Posterior vena cava (tissue), 2 donors: ENCODE measurements at regions of chr1 and their contacts with region 1.

Region 1: GRCh38 chr1:157490467-157491165 is 61.7 kb downstream of the FCRL5 start:
- DNase-seq: peak; percentile 89

Region 2: DNA sequence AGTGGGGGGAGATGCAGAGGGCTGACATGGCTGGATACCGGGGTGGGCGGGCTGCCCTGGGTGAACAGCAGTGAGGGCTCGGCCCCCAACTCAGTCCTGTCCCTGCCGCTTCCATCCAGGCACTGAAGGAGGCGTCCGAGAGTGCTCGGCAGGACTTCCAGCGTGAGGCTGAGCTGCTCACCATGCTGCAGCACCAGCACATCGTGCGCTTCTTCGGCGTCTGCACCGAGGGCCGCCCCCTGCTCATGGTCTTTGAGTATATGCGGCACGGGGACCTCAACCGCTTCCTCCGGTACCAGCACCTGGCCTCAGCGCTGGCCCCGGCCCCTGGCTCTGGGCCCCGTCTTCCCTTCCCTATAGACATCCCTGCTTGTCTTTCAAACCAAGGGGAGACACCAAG is 614.3 kb before region 1 on chr1:
- intact Hi-C with region 1: no loop called
- DNase-seq: no peak

Region 3: DNA sequence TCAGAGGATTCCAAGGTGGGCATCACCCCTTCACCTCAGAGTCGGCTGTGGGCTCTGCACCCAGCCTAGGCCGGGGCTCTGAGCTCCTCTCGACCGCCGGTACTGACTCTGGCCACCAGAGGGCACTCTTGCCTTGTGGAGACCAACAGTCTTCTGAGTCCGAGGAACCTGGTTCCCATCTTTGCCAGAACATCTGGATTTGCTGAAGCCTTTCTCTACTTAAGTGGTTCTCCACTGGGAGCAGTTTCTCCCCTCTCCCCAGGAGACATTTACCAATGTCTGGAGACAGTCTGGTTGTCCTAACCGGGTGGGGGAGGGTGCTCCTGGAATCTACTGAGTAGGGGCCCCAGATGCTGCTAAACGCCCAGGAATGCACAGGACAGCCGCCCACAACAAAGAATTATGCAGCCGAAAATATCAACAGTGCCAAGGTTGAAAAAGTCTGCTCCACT is 400.4 kb before region 1 on chr1:
- intact Hi-C with region 1: loop called in 1 of 2 experiments (anchors 10 kb)
- DNase-seq: peak; percentile 94

Region 4: GRCh38 chr1:157170677-157171515 is 319.7 kb before region 1 on chr1:
- intact Hi-C with region 1: loop called (anchors 10 kb)
- DNase-seq: no peak

Region 5: DNA sequence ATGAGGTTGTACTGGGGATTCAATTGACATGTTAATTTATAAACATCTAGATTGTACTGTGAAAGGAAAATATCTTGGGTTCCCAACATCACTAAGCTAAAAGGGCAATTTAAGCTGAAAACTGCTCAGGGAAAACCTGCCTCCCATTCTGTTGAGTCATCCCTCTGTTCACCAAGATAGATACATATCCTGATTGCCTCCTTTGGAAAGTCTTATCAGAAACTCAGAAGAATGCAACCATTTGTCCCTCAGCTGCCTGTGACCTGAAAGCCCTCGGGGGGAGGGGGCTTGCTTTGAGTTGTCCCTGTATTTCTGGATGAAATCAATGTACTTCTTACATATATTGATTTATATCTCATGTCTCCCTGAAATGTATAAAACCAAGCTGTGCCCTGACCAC is 165.4 kb before region 1 on chr1:
- intact Hi-C with region 1: no loop called
- DNase-seq: no peak

Region 6: GRCh38 chr1:157369808-157370521 is 120.7 kb before region 1 on chr1:
- intact Hi-C with region 1: loop called (anchors 5 to 10 kb)
- DNase-seq: no peak

Region 7: DNA sequence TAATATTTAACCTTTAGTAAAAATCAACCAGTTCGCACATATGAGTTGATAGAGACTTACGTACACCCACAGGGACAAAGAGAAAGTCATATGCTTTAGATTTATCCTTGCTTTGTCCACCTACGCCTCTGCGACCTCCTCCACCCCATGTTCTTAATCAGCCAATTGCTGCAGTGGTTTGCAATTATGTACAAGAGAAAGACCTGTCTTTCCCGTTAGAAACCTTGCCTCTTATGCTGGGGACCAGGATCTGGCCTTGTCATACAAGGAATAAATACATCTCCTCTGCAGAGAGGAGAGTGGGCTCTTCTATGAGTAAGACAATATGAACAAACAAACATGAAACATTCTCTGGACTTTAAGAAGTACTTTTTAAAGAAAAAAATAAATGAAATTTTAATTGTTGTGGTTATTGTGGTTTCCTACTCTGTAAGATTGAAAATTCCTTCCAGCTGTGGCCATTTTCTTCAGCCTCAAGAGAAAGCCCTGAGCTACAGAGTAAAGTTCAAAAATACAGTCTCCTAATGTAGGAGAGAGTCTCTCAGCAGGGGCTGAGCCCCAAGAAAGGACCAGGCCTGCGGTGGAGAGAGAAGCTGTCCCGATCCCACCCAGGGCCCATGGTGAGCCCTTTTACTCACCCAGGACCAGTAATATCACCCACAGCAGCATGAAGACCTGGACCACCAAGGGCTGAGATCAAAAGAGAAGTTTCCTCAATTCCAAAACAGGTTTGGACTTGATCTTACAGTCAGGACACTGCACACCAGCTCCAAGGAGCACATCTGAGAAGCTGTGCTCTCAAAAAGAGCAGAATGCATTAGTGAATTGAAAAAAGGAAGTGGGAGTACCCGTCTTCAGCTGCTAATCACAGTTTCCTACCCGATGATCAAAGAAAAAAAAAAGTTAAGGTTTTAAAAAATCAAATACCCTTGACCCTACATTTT is 61.4 kb after region 1 on chr1 and contains the start of gene FCRL5:
- intact Hi-C with region 1: loop called in 1 of 2 experiments (anchors 2 kb)
- DNase-seq: no peak
- total RNA-seq, gene FCRL5: 0.19 to 0.32 TPM